ENCODE measurements at regions of chr13 and their contacts with region 1.

Region 1: DNA sequence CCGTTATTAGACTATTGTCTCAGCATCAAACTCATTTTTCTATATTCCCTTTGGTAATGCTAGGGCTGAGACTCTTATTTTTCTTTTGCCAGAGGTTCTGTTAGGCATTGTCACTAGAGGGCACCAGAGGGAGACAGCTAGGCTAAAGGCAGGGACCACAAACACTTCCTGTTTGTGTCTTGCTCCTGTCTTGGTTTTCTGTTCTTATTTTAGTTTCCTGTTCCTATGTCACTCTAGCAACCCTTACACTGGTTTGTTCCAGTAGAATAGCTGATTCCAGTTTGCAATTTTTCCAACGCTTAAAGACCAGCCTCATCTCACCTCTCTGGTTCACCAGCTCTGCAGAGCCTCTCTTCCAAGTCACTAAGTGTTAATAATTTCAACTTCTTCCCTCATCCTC is 772.0 kb downstream of the DIAPH3 start:
- DNase-seq: peak; percentile 27 to 44
- ATAC-seq: peak; percentile 75

Region 2: DNA sequence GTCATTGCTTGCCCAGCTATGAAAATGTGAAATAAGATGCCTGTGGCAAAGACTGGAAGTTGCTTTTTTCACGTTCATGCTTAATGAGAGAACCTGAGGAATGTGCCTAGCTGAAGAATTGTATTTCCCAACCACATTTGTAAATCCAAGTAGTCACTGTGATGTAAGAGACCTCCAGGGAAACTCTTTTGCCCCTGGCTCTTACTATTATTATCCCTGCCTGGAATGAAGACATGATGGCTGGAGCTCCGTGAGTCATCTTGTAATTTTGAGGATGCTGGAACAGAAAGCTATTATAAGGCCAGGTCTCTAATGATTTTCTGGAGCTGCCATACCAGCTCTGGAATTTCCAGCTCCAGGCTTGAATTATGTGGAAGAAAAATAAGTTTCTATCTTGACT is 122.2 kb before region 1 on chr13:
- intact Hi-C with region 1: no loop called
- DNase-seq: no peak
- ATAC-seq: no peak

Region 3: DNA sequence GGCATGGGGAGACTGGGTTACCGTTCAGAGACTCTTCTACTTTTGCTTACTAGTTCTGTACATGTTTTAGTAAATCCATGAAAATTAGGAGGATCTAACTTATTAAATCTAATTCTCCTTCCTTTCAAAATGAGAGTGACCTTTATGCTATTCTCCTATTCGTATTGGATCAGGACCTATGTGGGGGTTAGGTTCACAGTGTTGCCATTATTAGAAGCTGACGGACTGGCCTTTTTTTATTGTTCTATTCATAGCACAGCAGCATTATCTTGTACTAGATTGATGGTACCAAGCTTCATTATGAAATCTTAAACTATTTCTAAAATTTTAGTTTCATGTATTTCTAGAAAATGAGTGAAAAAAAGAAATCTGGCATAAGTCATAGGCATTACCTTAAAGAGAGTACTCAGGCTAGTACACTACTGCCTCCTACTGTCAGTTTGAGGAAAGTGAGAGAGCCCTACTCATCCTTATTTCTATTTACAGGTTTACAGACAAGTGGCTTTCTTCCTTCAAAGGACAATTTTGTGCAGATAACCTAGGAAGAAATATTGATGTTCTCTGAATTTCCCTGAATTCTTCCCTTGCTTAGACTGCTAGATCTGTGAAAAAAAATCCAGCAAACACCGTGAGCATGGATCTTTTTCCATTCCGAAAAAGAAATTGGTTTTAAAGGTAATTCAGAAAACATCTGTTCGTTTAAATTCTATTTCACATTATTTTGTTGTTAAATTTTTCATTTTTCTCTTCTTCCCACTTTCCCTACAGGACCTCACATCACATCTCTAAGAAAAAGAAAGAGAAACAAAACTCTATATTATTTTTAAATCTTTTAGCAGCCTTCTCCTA is 286.5 kb after region 1 on chr13:
- intact Hi-C with region 1: loop called in 1 of 2 experiments (anchors 5 kb)
- DNase-seq: no peak
- ATAC-seq: peak; percentile 77